CD8-positive, alpha-beta T cell (primary cell): ENCODE measurements at regions of chr11 and their contacts with region 1.

Region 1: GRCh38 chr11:68471360-68472340 is 11.1 kb downstream of the PPP6R3 start:
- DNase-seq: peak in 5 of 9 experiments; percentile 46 to 77 (median 67)
- ATAC-seq: peak; percentile 75
- H3K4me3 ChIP-seq: peak overlapping the region; percentile 3
- H3K4me3 Mint-ChIP-seq: peak overlapping the region; percentile 63
- H3K27ac ChIP-seq: peak overlapping the region in 1 of 2 experiments; percentile 54
- H3K27ac Mint-ChIP-seq: peak overlapping the region; percentile 79
- H3K4me1 ChIP-seq: peaks cover 66% of the 10 kb centered on the region
- H3K4me1 Mint-ChIP-seq: peaks cover 77% of the 10 kb centered on the region
- H3K27me3 ChIP-seq: no peaks in the 10 kb centered on the region
- H3K27me3 Mint-ChIP-seq: no peaks in the 10 kb centered on the region
- CTCF ChIP-seq: no peak

Region 2: DNA sequence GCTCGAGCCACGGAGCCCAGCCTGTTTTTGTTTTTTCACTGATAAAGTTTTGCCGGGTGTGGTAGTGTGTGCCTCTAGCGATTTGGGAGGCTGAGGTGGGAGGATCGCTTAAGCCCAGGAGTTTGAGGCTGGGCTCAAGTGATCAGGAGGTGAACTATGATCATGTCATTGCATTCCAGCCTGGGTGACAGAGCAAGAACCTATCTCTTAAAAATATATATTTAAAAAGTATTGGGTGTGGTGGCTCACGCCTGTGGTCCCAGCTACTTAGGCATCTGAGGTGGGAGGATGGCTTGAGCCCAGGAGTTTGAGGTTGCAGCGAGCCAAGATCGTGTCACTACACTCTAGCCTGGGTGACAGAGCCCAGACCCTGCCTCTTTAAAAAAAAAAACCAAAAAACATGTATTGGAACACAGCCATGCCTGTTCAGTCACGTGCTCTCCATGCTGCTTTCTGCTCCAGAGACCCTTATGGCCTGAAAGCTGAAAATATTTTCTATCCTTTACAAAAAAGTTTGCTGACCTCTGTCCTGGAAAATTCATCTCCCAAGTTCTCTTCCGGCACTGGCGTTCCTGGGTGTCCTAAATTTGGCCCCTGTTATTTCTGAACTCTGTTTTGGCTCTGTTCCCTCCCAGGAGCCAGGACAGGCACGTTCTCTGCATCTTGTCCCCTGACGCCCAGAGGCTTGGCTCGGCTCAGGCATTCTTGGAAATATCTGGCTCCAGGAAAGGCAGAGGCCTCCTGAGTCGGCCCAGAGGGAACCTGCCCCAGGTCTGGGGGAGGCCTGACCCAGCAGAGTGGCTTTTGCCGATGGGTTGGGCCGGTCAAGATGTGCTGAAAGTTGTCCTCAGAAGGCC is 72.4 kb before region 1 on chr11:
- CTCF ChIA-PET with region 1: no interaction called
- POLR2A ChIA-PET with region 1: no interaction called
- intact Hi-C with region 1: no loop called
- DNase-seq: no peak
- ATAC-seq: no peak
- H3K4me3 ChIP-seq: no peak overlapping the region
- H3K4me3 Mint-ChIP-seq: no peak overlapping the region
- H3K27ac ChIP-seq: no peak overlapping the region
- H3K27ac Mint-ChIP-seq: no peak overlapping the region
- H3K4me1 ChIP-seq: no peaks in the 10 kb centered on the region
- H3K4me1 Mint-ChIP-seq: no peaks in the 10 kb centered on the region
- H3K27me3 ChIP-seq: no peaks in the 10 kb centered on the region
- H3K27me3 Mint-ChIP-seq: no peaks in the 10 kb centered on the region
- CTCF ChIP-seq: no peak

Region 3: DNA sequence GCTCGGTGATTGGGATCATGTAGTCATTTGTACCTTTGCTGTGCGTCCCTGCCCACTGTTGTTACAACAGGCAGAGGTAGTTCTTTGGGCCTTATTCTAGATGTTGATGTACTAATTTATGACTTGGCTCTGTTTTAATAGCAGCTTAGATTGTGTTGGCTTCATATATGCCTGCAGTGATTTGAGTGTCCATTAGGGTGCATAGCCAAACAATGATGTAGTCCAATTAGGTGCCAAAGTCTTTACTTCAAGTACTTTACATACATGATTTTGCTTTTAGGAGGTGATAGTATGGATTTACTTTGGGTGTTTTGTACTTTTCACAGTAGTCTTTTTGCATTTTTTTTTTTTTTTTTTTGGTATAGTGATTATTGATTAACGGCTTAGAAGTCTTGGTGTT is 35.3 kb after region 1 on chr11:
- CTCF ChIA-PET with region 1: no interaction called
- POLR2A ChIA-PET with region 1: no interaction called
- intact Hi-C with region 1: loop called in 1 of 2 experiments (anchors 5 kb)
- DNase-seq: peak in 1 of 9 experiments; percentile 11
- ATAC-seq: peak; percentile 36
- H3K4me3 ChIP-seq: no peak overlapping the region
- H3K4me3 Mint-ChIP-seq: no peak overlapping the region
- H3K27ac ChIP-seq: no peak overlapping the region
- H3K27ac Mint-ChIP-seq: no peak overlapping the region
- H3K4me1 ChIP-seq: peaks cover 49% of the 10 kb centered on the region
- H3K4me1 Mint-ChIP-seq: peaks cover 78% of the 10 kb centered on the region
- H3K27me3 ChIP-seq: no peaks in the 10 kb centered on the region
- H3K27me3 Mint-ChIP-seq: no peaks in the 10 kb centered on the region
- CTCF ChIP-seq: no peak

Region 4: DNA sequence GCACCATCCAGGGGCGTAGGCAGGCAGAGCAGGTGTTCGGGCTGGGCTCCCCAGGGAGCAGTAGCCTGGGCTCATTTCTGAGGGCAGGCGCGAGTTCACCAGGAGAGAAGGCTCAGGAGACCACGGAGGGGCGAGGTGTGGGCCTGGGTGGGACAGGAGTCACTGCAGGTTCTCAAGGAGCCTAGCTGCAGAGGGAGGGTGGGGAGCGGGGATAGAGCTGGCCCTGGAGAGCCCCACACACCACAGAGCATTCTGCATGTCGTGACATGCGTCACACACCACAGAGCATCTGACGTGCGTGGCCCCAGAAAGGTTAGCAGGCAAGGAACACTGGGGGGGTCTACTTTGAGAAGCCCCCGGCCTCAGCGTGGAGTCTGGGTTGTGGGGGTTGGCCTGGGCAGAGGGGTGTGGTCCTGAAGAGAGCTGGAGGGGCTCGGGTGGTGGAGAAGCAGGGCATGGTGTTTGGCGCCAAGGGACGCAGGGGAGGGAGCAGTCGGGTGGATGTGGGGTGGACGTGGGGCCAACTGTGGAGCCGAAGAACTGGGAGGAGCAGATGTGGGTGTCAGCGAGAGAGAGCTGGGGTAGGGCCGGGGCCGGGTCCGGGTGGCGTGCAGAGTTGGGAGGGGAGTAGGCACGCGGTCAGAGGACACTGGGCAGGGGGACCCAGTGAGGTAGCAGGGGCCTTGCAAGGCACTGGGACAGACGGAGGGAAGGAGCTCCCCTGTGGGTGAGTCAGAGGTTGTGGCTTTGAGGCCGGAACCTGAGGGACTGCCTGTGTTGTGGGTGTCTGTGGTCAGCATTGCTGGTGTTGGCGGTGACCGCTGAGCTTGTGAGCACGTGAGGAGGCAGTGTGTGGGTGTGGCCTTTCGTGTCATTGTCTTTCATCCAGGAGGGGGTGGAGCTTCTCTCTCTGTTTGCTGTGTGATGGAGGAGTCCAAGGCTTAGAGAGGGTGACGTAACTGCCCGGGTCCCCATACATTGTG is 1952.2 kb after region 1 on chr11:
- CTCF ChIA-PET with region 1: no interaction called
- POLR2A ChIA-PET with region 1: no interaction called
- intact Hi-C with region 1: no loop called
- DNase-seq: peak in 7 of 9 experiments; percentile 13 to 75 (median 30)
- ATAC-seq: peak; percentile 31
- H3K4me3 ChIP-seq: no peak overlapping the region
- H3K4me3 Mint-ChIP-seq: no peak overlapping the region
- H3K27ac ChIP-seq: no peak overlapping the region
- H3K27ac Mint-ChIP-seq: no peak overlapping the region
- H3K4me1 ChIP-seq: peaks cover 9% of the 10 kb centered on the region
- H3K4me1 Mint-ChIP-seq: no peaks in the 10 kb centered on the region
- H3K27me3 ChIP-seq: peaks cover 0 to 8% of the 10 kb centered on the region in 2 experiments
- H3K27me3 Mint-ChIP-seq: no peaks in the 10 kb centered on the region
- CTCF ChIP-seq: no peak